ENCODE measurements at regions of chr17 and their contacts with region 1.

Region 1: DNA sequence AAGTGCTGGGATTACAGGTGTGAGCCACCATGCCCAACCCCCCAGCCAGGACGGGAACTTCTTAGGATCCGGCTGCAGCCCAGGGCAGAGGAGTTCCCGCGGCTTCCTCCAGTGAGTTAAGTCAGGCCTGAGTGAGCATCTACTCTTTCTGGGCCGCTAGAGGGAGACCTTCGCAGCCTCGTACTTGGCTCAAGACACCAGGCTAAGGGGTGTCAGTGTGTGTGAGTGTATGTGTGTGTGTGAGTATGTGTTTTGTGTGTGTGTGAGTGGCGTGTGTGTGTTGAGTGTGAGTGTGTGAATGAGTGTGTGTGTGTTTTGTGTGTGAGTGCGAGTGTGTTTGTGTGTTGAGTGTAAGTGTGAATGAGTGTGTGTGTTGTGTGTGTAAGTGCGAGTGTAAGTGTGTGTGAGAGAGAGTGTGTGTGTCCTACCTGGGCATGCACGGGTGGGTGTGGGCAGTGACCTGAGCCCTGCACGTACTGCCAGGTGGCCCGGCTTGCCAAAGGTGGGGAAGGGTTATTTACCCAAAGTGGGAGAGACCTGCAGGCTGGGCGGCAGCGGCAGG is 58.5 kb downstream of the TMEM235 start:
- DNase-seq: peak; percentile 60 to 93 (median 80)

Region 2: GRCh38 chr17:78421484-78422266 is 131.8 kb after region 1 on chr17:
- intact Hi-C with region 1: loop called (anchors 10 kb)
- DNase-seq: peak; percentile 52 to 92 (median 78)